ENCODE measurements at regions of chr1 and their contacts with region 1.

Region 1: GRCh38 chr1:178055779-178056471 is 38.0 kb upstream of the RASAL2 start:
- DNase-seq: peak in 1 of 2 donors; percentile 18
- ATAC-seq: peak in 1 of 2 donors; percentile 55
- H3K4me3 ChIP-seq: no peak overlapping the region
- H3K27ac ChIP-seq: peak overlapping the region; percentile 63 to 78 (median 71)
- H3K4me1 ChIP-seq: peaks cover 32 to 69% of the 10 kb centered on the region in 2 donors
- H3K27me3 ChIP-seq: no peaks in the 10 kb centered on the region
- CTCF ChIP-seq: peak in 2 of 5 experiments; percentile 35 to 40
- POLR2A ChIP-seq: no peak

Region 2: GRCh38 chr1:177959811-177960515 is 96.0 kb before region 1 on chr1:
- in situ Hi-C with region 1: loop called in 1 of 4 experiments (anchors 5 kb)
- intact Hi-C with region 1: no loop called
- DNase-seq: no peak
- ATAC-seq: peak; percentile 64 to 87
- H3K4me3 ChIP-seq: no peak overlapping the region
- H3K27ac ChIP-seq: no peak overlapping the region
- H3K4me1 ChIP-seq: no peaks in the 10 kb centered on the region
- H3K27me3 ChIP-seq: no peaks in the 10 kb centered on the region
- CTCF ChIP-seq: peak in 3 of 5 experiments; percentile 14 to 58 (median 50)
- POLR2A ChIP-seq: no peak

Region 3: GRCh38 chr1:178093205-178093957 is 37.5 kb after region 1 on chr1:
- in situ Hi-C with region 1: no loop called
- intact Hi-C with region 1: loop called (anchors 5 kb)
- DNase-seq: peak; percentile 82 to 87
- ATAC-seq: peak; percentile 93
- H3K4me3 ChIP-seq: peak overlapping the region; percentile 89 to 92 (median 91)
- H3K27ac ChIP-seq: peak overlapping the region; percentile 84 to 90 (median 86)
- H3K4me1 ChIP-seq: peaks cover 22 to 26% of the 10 kb centered on the region in 2 donors
- H3K27me3 ChIP-seq: no peaks in the 10 kb centered on the region
- CTCF ChIP-seq: no peak
- POLR2A ChIP-seq: no peak

Region 4: DNA sequence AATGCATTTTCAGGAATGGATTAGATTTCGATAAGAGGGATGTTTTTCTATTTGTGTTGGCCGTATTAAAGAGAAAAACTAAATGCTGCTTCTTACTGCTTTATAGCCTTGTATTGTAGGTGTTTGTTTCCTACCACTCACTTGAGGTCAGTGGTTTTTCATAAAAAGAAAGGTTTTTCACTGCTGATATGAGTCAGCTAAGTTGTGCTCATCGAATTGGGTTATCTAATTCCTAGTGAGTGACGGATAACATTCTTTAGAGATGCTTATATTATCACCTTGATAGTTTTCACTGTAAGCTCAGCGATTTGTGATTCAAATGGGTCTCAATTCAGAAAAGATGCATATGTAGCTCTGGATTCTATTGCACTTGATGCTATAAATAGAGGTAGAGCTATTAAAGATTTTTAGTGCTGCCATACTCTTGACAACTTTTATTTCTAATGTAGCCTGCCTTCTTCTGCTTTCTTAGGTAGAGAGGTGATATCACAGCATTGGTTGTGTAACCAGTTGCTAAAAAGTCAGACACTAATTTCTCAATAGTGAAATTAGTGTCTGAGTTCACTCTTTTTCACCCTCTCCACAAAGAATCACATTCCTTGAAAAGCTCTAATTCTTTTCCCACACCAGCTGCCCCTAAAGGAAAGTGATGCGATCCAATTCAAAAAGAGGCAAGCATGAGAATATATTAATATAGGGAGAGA is 217.9 kb after region 1 on chr1:
- in situ Hi-C with region 1: no loop called
- intact Hi-C with region 1: loop called (anchors 10 kb)
- DNase-seq: no peak
- ATAC-seq: no peak
- H3K4me3 ChIP-seq: no peak overlapping the region
- H3K27ac ChIP-seq: no peak overlapping the region
- H3K4me1 ChIP-seq: peaks cover 3 to 4% of the 10 kb centered on the region in 2 donors
- H3K27me3 ChIP-seq: no peaks in the 10 kb centered on the region
- CTCF ChIP-seq: no peak
- POLR2A ChIP-seq: no peak